ENCODE measurements at regions of chr6 and their contacts with region 1.

Region 1: DNA sequence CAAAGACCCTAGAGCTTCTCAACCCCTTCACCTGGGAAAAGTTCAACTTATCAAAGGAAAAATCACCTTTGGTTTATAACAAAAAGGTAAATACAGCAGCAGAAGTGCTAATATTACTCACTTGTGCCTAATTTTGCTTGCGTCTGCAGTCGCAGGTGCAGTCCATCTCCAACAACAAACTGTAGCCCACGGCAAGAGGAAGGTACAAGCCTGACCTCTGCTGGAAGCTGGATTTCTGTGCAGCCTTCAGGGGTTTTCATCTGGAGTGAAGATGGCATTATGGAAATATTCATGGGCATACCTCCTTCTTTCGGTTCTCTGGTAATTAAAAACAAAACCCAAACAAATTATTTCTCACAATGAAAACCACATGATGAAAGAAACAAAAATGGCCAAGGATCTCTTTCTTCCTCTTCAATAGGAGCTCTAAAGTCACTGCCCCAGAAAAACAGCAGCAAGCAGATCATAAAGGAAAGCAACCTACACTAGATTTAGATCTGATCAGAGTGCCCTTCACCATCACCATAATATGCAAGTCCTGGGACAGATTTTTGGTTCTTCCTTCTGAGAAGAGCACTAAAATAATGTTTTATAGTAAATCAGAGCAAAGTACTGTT is 7.8 kb downstream of the UBE3D start:
- DNase-seq: no peak
- H3K4me3 ChIP-seq: no peak overlapping the region
- H3K27ac ChIP-seq: no peak overlapping the region
- H3K4me1 ChIP-seq: peaks cover 0 to 36% (median 18%) of the 10 kb centered on the region in 4 donors
- H3K27me3 ChIP-seq: no peaks in the 10 kb centered on the region
- CTCF ChIP-seq: peak; percentile 82 to 84 (median 83)
- EP300 ChIP-seq: no peak
- POLR2A ChIP-seq: no peak

Region 2: GRCh38 chr6:82247634-82248232 is 810.1 kb before region 1 on chr6 and contains the start of gene IBTK:
- intact Hi-C with region 1: loop called (anchors 2 kb)
- DNase-seq: peak; percentile 99
- H3K4me3 ChIP-seq: peak within 1 kb of the TSS; percentile 90 to 94 (median 92)
- H3K27ac ChIP-seq: peak within 1 kb of the TSS; percentile 95 to 97 (median 96)
- H3K4me1 ChIP-seq: peaks cover 29 to 62% (median 49%) of the 10 kb centered on the region in 4 donors
- H3K27me3 ChIP-seq: no peaks in the 10 kb centered on the region
- CTCF ChIP-seq: no peak
- EP300 ChIP-seq: no peak
- POLR2A ChIP-seq: peak; percentile 59
- total RNA-seq, gene IBTK: 26.2 to 38.6 (median 27.2) TPM

Region 3: DNA sequence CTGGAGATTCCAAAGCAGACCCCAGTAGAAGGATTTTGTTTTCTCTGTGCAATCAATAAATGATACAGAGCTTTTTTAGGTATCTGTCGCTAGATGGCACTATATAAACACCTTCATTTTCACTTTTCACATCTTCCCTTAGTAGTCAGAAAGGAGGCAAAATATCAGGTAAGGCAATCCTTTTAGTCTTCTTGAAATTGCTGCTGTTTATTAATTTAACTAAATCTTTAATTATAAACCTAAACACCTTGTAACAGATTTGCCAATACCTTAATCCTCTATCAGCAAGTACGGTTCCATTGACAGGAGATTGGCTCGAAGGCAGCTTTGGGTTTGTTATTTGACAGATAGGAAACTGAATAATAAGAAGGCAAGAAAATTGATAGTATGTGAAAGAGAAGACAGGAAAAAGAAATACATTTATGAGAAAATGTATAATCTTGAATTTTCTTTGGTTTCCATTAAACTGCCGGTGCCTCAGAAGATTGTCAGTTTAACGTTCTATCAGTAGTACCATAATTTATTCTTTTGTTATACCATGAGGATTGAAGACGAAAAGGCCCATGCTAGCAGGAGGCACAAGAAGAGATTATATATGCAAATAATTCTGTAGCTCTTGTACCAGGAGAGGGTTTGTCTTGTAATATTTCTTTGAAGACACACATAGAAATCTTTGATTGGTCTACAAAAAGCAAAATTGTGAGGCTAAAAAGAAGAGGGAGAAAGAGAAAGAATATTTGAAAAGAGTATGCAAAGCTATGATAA is 786.8 kb before region 1 on chr6:
- intact Hi-C with region 1: loop called (anchors 2 kb)
- DNase-seq: no peak
- H3K4me3 ChIP-seq: no peak overlapping the region
- H3K27ac ChIP-seq: peak overlapping the region in 2 of 4 donors; percentile 17 to 61
- H3K4me1 ChIP-seq: peaks cover 0 to 29% (median 20%) of the 10 kb centered on the region in 4 donors
- H3K27me3 ChIP-seq: no peaks in the 10 kb centered on the region
- CTCF ChIP-seq: peak; percentile 62 to 73 (median 68)
- EP300 ChIP-seq: no peak
- POLR2A ChIP-seq: no peak

Region 4: DNA sequence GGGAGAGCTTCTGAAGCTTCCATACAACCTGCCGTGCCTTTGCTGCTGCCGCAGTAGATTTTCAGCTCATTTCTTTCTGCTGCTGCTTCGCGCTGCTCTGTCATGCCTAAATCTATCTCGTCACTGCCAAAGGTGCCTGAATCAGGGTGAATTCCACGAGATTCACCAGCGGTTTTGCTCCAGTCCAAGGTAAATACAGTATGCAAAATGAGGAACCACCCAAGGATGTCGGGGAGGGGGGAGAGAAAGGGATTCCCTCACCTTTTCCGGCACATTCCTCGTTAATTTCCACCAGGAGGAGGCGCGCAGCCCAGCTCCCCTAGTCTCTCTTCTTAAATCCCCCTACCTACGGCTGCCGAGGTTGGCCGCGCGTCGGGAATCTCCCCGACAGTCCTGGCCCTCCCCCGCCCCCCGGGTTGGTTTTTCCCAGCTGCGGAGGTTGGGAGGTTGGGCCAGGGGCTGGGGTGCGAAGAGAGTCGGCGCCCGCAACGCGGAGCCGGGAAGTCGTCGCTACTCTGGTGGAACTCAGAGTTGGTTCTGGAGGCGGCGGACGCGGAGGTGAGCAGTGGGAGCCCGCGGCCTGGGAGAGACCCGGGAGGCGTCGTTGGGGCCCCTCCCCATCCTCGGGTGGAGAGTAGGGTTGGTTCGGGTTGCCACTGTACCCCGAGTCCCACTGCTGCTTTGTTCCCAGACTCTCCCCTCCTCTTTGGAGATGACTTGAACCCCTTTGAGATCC is 694.3 kb before region 1 on chr6 and contains the start of gene TPBG:
- intact Hi-C with region 1: loop called (anchors 10 kb)
- DNase-seq: no peak
- H3K4me3 ChIP-seq: peak within 1 kb of the TSS; percentile 71 to 88 (median 76)
- H3K27ac ChIP-seq: peak within 1 kb of the TSS; percentile 91 to 97 (median 94)
- H3K4me1 ChIP-seq: peaks cover 4 to 63% (median 42%) of the 10 kb centered on the region in 4 donors
- H3K27me3 ChIP-seq: no peaks in the 10 kb centered on the region
- CTCF ChIP-seq: peak; percentile 13 to 41 (median 26)
- EP300 ChIP-seq: no peak
- POLR2A ChIP-seq: peak; percentile 31
- total RNA-seq, gene TPBG: 111 to 181 (median 118) TPM

Region 5: GRCh38 chr6:82616386-82617028 is 441.3 kb before region 1 on chr6:
- intact Hi-C with region 1: loop called (anchors 10 kb)
- DNase-seq: no peak
- H3K4me3 ChIP-seq: no peak overlapping the region
- H3K27ac ChIP-seq: peak overlapping the region in 3 of 4 donors; percentile 38 to 63 (median 47)
- H3K4me1 ChIP-seq: peaks cover 0 to 47% (median 26%) of the 10 kb centered on the region in 4 donors
- H3K27me3 ChIP-seq: no peaks in the 10 kb centered on the region
- CTCF ChIP-seq: peak in 1 of 3 experiments; percentile 29
- EP300 ChIP-seq: no peak
- POLR2A ChIP-seq: no peak

Region 6: DNA sequence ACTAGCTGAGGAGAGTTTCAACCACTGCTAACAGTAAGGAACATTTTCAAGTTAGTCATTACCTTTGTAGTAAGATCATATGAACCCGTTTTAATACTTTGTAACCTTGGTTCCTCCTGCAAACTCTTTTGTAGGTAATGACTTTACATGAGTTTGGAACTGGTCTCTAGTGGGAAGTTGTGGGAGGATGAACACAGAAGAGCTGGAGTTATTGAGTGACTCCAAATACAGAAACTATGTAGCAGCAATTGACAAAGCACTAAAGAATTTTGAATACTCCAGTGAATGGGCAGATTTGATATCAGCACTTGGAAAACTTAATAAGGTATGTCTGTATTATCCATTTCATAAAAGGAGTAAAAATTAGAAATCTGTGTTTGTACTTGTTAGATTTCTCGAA is 39.0 kb after region 1 on chr6:
- intact Hi-C with region 1: no loop called
- DNase-seq: no peak
- H3K4me3 ChIP-seq: no peak overlapping the region
- H3K27ac ChIP-seq: no peak overlapping the region
- H3K4me1 ChIP-seq: peaks cover 0 to 18% (median 8%) of the 10 kb centered on the region in 4 donors
- H3K27me3 ChIP-seq: no peaks in the 10 kb centered on the region
- CTCF ChIP-seq: no peak
- EP300 ChIP-seq: no peak
- POLR2A ChIP-seq: no peak

Region 7: DNA sequence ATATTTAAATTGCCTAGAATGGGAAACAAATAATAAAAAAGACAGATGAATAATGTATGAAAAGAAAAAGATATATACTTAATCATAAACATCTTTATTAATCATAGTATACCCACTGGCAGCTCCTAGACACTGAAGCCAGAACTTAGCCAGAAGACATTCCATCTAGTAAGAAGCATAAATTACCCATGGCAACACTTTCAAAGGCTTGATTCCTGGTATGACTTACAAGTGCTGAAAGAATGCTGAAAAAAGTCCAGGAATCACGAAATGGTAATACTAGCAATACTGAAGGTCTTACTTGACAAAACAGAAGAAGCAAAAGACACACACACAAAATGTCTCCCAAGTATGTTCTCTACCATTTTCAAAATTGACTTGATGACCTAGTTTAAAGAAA is 173.3 kb after region 1 on chr6:
- intact Hi-C with region 1: no loop called
- DNase-seq: no peak
- H3K4me3 ChIP-seq: no peak overlapping the region
- H3K27ac ChIP-seq: no peak overlapping the region
- H3K4me1 ChIP-seq: no peaks in the 10 kb centered on the region
- H3K27me3 ChIP-seq: no peaks in the 10 kb centered on the region
- CTCF ChIP-seq: no peak
- EP300 ChIP-seq: no peak
- POLR2A ChIP-seq: no peak

Region 8: GRCh38 chr6:83270971-83271719 is 213.3 kb after region 1 on chr6:
- intact Hi-C with region 1: no loop called
- DNase-seq: no peak
- H3K4me3 ChIP-seq: no peak overlapping the region
- H3K27ac ChIP-seq: no peak overlapping the region
- H3K4me1 ChIP-seq: peaks cover 0 to 29% (median 5%) of the 10 kb centered on the region in 4 donors
- H3K27me3 ChIP-seq: no peaks in the 10 kb centered on the region
- CTCF ChIP-seq: no peak
- EP300 ChIP-seq: no peak
- POLR2A ChIP-seq: no peak

Region 9: DNA sequence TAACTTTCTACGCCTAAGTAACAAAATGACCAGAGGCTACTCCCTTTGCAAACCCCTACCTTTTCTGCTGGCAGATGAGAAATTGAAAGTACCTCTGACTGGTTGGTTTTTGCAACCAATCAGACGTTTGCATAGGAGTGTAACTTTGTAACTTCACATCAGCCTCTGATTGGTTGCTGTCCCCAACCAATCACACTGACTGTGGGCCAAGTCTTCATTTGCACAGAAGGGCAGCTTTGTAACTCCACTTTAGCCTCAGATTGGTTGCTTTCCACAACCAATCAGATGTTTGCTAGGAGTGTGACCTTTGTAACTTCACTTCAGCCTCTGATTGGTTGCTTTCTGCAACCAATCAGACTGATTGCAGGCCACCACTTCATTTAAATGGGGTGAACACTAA is 284.0 kb after region 1 on chr6:
- intact Hi-C with region 1: no loop called
- DNase-seq: no peak
- H3K4me3 ChIP-seq: no peak overlapping the region
- H3K27ac ChIP-seq: no peak overlapping the region
- H3K4me1 ChIP-seq: no peaks in the 10 kb centered on the region
- H3K27me3 ChIP-seq: no peaks in the 10 kb centered on the region
- CTCF ChIP-seq: no peak
- EP300 ChIP-seq: no peak
- POLR2A ChIP-seq: no peak

Measured in esophagus muscularis mucosa (tissue), 4 donors.